ENCODE measurements at regions of chr14 and their contacts with region 1.

Region 1: GRCh38 chr14:67526676-67527459 is 6.2 kb upstream of the PLEKHH1 start:
- DNase-seq: peak; percentile 72 to 76
- H3K4me3 ChIP-seq: no peak overlapping the region
- H3K4me3 Mint-ChIP-seq: no peak overlapping the region
- H3K27ac Mint-ChIP-seq: peak overlapping the region; percentile 19
- H3K4me1 ChIP-seq: no peaks in the 10 kb centered on the region; the same call in 1 of the 2 replicates
- H3K4me1 Mint-ChIP-seq: no peaks in the 10 kb centered on the region
- H3K27me3 ChIP-seq: no peaks in the 10 kb centered on the region
- H3K27me3 Mint-ChIP-seq: no peaks in the 10 kb centered on the region
- CTCF ChIP-seq: peak; percentile 67 to 90

Region 2: DNA sequence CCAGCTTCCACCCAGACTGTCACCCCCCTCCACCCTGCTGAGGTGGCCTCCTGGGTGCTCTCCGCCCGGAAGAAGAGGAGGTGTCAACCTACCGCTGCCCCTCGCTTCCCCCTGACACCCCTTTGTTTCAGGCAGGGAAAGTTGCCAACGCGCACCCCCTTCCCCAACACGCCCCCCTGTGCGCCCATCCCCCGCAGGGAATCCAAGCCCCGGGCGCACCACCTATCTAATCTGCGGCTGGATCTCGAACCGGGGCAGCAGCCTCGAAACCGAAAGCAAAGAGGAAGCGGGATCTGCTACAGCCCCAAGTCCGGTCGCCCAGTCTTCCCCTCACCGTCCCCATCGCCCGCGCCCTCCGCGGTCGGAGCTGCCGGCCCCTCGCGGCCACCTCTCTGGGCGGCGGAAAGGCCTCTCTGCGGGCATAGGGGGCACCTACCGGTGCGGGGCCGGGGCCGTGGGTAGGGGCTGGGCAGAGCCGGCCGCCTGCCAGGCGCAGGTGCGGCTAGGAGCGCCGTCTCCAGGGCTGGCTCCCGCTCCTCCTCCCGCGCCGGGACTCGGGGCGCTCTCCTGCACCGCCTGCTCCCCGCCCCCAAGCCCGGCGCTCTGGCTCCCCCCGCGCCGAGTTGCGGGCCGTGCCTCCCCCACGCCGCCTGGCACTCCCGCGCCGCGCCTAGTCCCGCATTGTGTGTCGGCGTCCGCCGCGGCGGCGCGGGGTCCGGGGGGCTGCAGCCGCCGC is 12.1 kb before region 1 on chr14:
- CTCF ChIA-PET with region 1: interaction called, 21 read pairs
- POLR2A ChIA-PET with region 1: no interaction called
- intact Hi-C with region 1: no loop called
- DNase-seq: peak in 1 of 2 experiments; percentile 34
- H3K4me3 ChIP-seq: peak overlapping the region; percentile 52
- H3K4me3 Mint-ChIP-seq: peak overlapping the region; percentile 71
- H3K27ac Mint-ChIP-seq: no peak overlapping the region
- H3K4me1 ChIP-seq: peaks cover 4% of the 10 kb centered on the region; the same call in 1 of the 2 replicates
- H3K4me1 Mint-ChIP-seq: no peaks in the 10 kb centered on the region
- H3K27me3 ChIP-seq: no peaks in the 10 kb centered on the region
- H3K27me3 Mint-ChIP-seq: peaks cover 13% of the 10 kb centered on the region
- CTCF ChIP-seq: no peak

Region 3: DNA sequence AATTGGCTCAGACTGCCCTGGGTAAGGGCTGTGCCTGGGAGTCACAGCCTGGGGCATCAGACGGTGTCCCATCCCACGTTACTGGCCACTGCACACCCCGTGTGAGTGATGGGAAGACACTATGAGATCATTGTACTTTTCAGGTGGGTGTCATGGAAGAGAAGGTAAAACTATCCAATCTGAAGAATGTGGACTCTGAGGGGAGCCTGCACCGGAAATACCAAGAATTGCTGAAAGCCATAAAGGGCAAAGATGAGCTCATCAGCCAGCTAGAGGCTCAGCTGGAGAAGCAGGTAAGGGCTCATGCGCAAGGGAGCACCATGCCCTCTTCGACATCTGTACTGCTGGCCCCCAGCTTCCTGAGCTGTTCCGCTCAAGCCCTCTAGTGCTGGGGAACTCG is 30.3 kb after region 1 on chr14:
- CTCF ChIA-PET with region 1: interaction called, 17 read pairs
- POLR2A ChIA-PET with region 1: no interaction called
- intact Hi-C with region 1: no loop called
- DNase-seq: peak; percentile 51 to 80
- H3K4me3 ChIP-seq: no peak overlapping the region
- H3K4me3 Mint-ChIP-seq: no peak overlapping the region
- H3K27ac Mint-ChIP-seq: peak overlapping the region; percentile 74
- H3K4me1 ChIP-seq: peaks cover 17% of the 10 kb centered on the region
- H3K4me1 Mint-ChIP-seq: peaks cover 8% of the 10 kb centered on the region
- H3K27me3 ChIP-seq: no peaks in the 10 kb centered on the region
- H3K27me3 Mint-ChIP-seq: no peaks in the 10 kb centered on the region
- CTCF ChIP-seq: no peak

Region 4: DNA sequence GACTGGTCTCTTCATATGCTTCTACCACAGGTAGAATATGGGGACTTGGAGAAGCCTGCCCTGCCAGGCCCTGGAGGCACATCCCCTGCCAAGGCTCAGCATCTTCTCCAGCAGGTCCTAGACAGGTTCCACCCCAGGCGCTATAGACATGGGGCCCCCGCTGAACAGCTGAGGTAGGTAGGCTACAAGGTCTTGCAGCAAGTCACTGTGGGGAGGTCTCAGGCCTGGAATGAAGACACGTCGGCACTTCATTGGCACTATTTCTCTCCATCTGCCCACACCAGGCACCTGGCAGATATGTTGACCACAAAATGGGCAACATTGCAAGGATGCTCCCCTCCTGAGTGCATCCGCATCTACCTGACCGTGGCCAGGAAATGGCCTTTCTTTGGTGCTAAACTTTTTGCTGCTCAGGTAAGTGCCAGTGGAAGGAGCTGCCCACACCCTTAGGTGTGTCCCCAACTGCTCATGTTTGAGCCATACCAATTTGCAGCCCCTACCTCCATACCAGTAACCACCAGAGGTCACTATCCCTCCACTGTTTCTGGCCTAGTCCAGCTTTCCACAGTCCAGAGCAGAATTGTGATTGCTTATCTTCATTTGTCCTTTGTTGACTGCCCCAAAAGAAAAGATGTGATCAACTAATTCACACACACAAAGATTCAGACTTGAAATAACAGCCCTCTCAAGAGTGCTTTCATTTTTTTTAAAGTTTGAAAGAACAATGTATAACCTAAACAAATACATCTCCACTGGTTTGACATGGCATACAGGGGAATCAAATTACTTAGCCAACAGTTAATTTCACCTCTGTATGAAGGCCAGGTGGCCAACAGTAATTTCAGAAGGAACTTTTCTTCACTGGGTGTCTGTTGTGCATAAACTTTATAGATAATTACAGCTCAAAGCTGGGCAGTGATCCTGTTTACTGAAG is 57.1 kb after region 1 on chr14:
- CTCF ChIA-PET with region 1: interaction called, 36 read pairs
- POLR2A ChIA-PET with region 1: no interaction called
- intact Hi-C with region 1: loop called (anchors 1 kb)
- DNase-seq: peak; percentile 62 to 73
- H3K4me3 ChIP-seq: no peak overlapping the region
- H3K4me3 Mint-ChIP-seq: no peak overlapping the region
- H3K27ac Mint-ChIP-seq: no peak overlapping the region
- H3K4me1 ChIP-seq: peaks cover 13% of the 10 kb centered on the region
- H3K4me1 Mint-ChIP-seq: no peaks in the 10 kb centered on the region
- H3K27me3 ChIP-seq: no peaks in the 10 kb centered on the region
- H3K27me3 Mint-ChIP-seq: no peaks in the 10 kb centered on the region
- CTCF ChIP-seq: peak; percentile 78 to 82

Region 5: GRCh38 chr14:67704484-67705089 is 177.7 kb after region 1 on chr14:
- CTCF ChIA-PET with region 1: interaction called, 27 read pairs
- POLR2A ChIA-PET with region 1: no interaction called
- intact Hi-C with region 1: loop called (anchors 1 kb)
- DNase-seq: peak in 1 of 2 experiments; percentile 64
- H3K4me3 ChIP-seq: no peak overlapping the region
- H3K4me3 Mint-ChIP-seq: no peak overlapping the region
- H3K27ac Mint-ChIP-seq: no peak overlapping the region
- H3K4me1 ChIP-seq: no peaks in the 10 kb centered on the region
- H3K4me1 Mint-ChIP-seq: no peaks in the 10 kb centered on the region
- H3K27me3 ChIP-seq: no peaks in the 10 kb centered on the region
- H3K27me3 Mint-ChIP-seq: no peaks in the 10 kb centered on the region
- CTCF ChIP-seq: peak; percentile 73 to 78